ENCODE measurements at regions of chr2 and their contacts with region 1.

Region 1: GRCh38 chr2:213227458-213227857 is 56.8 kb upstream of the SPAG16 start:
- DNase-seq: peak; percentile 88
- ATAC-seq: peak; percentile 82
- H3K4me3 ChIP-seq: no peak overlapping the region
- H3K27ac ChIP-seq: peak overlapping the region; percentile 92
- H3K4me1 ChIP-seq: peaks cover 49% of the 10 kb centered on the region
- H3K27me3 ChIP-seq: no peaks in the 10 kb centered on the region
- CTCF ChIP-seq: no peak
- EP300 ChIP-seq: no peak; a peak in 3 of 4 replicates
- POLR2A ChIP-seq: no peak
- RAD21 ChIP-seq: peak; percentile 30; the same call in 1 of the 2 replicates

Region 2: GRCh38 chr2:213166109-213166508 is 61.3 kb before region 1 on chr2:
- CTCF ChIA-PET with region 1: interaction called, 9 read pairs
- POLR2A ChIA-PET with region 1: interaction called, 4 read pairs
- RAD21 ChIA-PET with region 1: interaction called, 540 read pairs
- SMC1A ChIA-PET with region 1: interaction called, 467 read pairs
- in situ Hi-C with region 1: loop called (anchors 5 kb)
- intact Hi-C with region 1: no loop called
- DNase-seq: no peak
- ATAC-seq: peak; percentile 93
- H3K4me3 ChIP-seq: no peak overlapping the region
- H3K27ac ChIP-seq: peak overlapping the region; percentile 76
- H3K4me1 ChIP-seq: peaks cover 35% of the 10 kb centered on the region
- H3K27me3 ChIP-seq: no peaks in the 10 kb centered on the region
- CTCF ChIP-seq: no peak
- EP300 ChIP-seq: peak in 1 of 2 experiments; percentile 19; a peak in 2 of 4 replicates
- POLR2A ChIP-seq: no peak
- RAD21 ChIP-seq: no peak

Region 3: DNA sequence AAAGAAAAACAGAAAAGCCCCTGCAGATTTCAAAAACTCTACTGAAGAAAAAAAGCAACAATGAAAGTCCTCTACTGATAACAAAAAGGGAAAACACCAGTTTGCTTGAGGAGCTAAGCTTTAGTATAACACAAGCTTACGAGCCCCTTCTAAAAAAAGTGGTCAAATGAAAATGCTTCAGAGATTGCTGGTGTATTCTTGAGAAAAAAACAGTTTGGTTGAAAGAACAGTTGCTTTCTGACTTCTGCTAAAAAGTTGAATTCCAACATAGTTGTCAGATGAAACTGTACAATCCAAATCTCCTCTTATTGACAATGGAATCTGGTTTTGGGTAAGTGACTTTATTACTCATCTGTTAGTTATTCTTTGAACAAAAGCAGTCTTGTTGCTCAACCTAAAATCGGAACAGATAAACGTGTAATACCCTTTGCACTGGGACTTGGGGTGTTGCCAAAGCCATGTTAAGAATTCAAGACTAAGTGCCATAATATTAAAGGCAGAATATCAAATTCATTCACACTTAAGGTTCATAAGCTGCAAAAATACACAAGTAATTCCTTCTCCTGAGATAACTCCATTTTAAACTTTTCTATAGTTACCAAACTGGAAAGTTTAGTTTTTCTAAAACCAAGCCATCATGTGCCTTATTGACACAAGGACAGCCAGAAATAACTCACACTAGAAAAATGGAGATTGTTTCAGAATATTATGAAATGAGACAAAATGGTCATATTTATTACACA is 11.5 kb after region 1 on chr2:
- CTCF ChIA-PET with region 1: interaction called, 4 read pairs
- POLR2A ChIA-PET with region 1: interaction called, 13 read pairs
- RAD21 ChIA-PET with region 1: interaction called, 67 read pairs
- SMC1A ChIA-PET with region 1: interaction called, 26 read pairs
- in situ Hi-C with region 1: no loop called
- intact Hi-C with region 1: no loop called
- DNase-seq: no peak
- ATAC-seq: peak; percentile 35
- H3K4me3 ChIP-seq: peak overlapping the region; percentile 58
- H3K27ac ChIP-seq: peak overlapping the region; percentile 98
- H3K4me1 ChIP-seq: peaks cover 47% of the 10 kb centered on the region
- H3K27me3 ChIP-seq: no peaks in the 10 kb centered on the region
- CTCF ChIP-seq: no peak
- EP300 ChIP-seq: peak; percentile 8 to 53; a peak in 1 of 4 replicates
- POLR2A ChIP-seq: no peak
- RAD21 ChIP-seq: no peak

Region 4: GRCh38 chr2:213281156-213281555 is 53.7 kb after region 1 on chr2:
- CTCF ChIA-PET with region 1: no interaction called
- POLR2A ChIA-PET with region 1: no interaction called
- RAD21 ChIA-PET with region 1: no interaction called
- SMC1A ChIA-PET with region 1: no interaction called
- in situ Hi-C with region 1: no loop called
- intact Hi-C with region 1: no loop called
- DNase-seq: no peak
- ATAC-seq: no peak
- H3K4me3 ChIP-seq: no peak overlapping the region
- H3K27ac ChIP-seq: no peak overlapping the region
- H3K4me1 ChIP-seq: no peaks in the 10 kb centered on the region
- H3K27me3 ChIP-seq: no peaks in the 10 kb centered on the region
- CTCF ChIP-seq: no peak
- EP300 ChIP-seq: no peak
- POLR2A ChIP-seq: no peak
- RAD21 ChIP-seq: no peak